ENCODE measurements at regions of chr10 and their contacts with region 1.

Region 1: GRCh38 chr10:102432162-102432950 is at the start of gene CUEDC2:
- DNase-seq: peak; percentile 96
- ATAC-seq: peak; percentile 98
- H3K4me3 Mint-ChIP-seq: peak within 1 kb of the TSS; percentile 93
- H3K27ac Mint-ChIP-seq: peak within 1 kb of the TSS; percentile 75
- H3K4me1 Mint-ChIP-seq: peaks cover 45% of the 10 kb centered on the region
- H3K27me3 Mint-ChIP-seq: no peaks in the 10 kb centered on the region
- CTCF ChIP-seq: no peak
- total RNA-seq, gene CUEDC2: 43.7 and 46.0 TPM in 2 replicates

Region 2: GRCh38 chr10:102151774-102152544 is 280.4 kb before region 1 on chr10 and contains the start of gene NOLC1:
- CTCF ChIA-PET with region 1: no interaction called
- POLR2A ChIA-PET with region 1: interaction called, 3 read pairs
- intact Hi-C with region 1: loop called (anchors 5 kb)
- DNase-seq: peak; percentile 99
- ATAC-seq: peak; percentile 96
- H3K4me3 Mint-ChIP-seq: peak within 1 kb of the TSS; percentile 97
- H3K27ac Mint-ChIP-seq: peak within 1 kb of the TSS; percentile 93
- H3K4me1 Mint-ChIP-seq: peaks cover 35% of the 10 kb centered on the region
- H3K27me3 Mint-ChIP-seq: no peaks in the 10 kb centered on the region
- CTCF ChIP-seq: no peak
- total RNA-seq, gene NOLC1: 95.1 and 106 TPM in 2 replicates

Region 3: GRCh38 chr10:102384053-102384452 is 48.3 kb before region 1 on chr10:
- CTCF ChIA-PET with region 1: no interaction called
- POLR2A ChIA-PET with region 1: interaction called, 11 read pairs
- intact Hi-C with region 1: no loop called
- DNase-seq: no peak
- ATAC-seq: peak; percentile 28
- H3K4me3 Mint-ChIP-seq: no peak overlapping the region
- H3K27ac Mint-ChIP-seq: peak overlapping the region; percentile 50
- H3K4me1 Mint-ChIP-seq: peaks cover 18% of the 10 kb centered on the region
- H3K27me3 Mint-ChIP-seq: no peaks in the 10 kb centered on the region
- CTCF ChIP-seq: no peak

Region 4: DNA sequence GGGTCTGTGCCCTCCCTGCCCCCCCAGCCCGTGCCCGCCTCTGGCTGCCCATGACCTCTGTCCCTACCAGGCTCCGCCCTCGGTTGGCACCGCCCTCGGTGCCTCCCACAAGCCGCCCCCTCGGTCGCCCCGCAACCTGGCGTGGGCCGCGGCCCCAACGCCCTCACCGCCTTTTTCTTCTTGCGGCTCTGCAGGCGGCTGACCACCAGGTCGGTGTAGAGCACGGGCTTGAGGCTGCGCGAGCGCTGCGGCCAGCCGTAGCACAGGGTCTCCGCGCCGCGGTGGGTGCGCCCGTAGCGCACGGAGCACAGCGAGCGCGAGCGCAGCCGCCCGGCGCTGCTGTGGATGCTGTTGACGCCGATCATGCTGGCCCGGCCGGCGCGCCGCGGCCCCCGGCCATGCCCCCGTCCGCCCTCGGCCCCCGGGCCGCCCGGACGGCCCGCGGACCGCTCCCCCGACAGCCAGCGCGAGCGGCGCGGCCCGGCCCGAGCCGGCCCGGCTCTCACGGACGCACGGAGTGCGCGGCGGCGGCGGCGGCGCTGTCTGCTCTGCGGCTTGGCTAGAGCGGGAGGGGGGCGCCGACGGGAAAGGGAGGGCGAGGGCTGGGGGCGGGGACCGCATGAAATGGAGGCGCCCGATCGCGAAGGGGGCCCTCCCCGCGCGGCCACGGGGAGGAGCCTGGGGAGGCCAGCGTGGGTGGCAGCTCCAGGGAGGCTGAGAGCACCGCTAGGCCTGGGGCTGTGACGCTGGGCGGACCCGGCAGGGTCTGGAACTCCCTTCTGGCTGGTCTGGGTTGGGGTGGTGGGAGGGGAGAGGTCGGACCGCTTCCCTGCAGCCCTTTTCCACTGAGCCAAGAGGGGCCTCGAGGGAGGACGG is 23.4 kb before region 1 on chr10:
- CTCF ChIA-PET with region 1: no interaction called
- POLR2A ChIA-PET with region 1: interaction called, 10 read pairs
- intact Hi-C with region 1: no loop called
- DNase-seq: peak; percentile 36
- ATAC-seq: peak; percentile 45
- H3K4me3 Mint-ChIP-seq: peak overlapping the region; percentile 59
- H3K27ac Mint-ChIP-seq: no peak overlapping the region
- H3K4me1 Mint-ChIP-seq: peaks cover 40% of the 10 kb centered on the region
- H3K27me3 Mint-ChIP-seq: peaks cover 42% of the 10 kb centered on the region
- CTCF ChIP-seq: no peak

Region 5: DNA sequence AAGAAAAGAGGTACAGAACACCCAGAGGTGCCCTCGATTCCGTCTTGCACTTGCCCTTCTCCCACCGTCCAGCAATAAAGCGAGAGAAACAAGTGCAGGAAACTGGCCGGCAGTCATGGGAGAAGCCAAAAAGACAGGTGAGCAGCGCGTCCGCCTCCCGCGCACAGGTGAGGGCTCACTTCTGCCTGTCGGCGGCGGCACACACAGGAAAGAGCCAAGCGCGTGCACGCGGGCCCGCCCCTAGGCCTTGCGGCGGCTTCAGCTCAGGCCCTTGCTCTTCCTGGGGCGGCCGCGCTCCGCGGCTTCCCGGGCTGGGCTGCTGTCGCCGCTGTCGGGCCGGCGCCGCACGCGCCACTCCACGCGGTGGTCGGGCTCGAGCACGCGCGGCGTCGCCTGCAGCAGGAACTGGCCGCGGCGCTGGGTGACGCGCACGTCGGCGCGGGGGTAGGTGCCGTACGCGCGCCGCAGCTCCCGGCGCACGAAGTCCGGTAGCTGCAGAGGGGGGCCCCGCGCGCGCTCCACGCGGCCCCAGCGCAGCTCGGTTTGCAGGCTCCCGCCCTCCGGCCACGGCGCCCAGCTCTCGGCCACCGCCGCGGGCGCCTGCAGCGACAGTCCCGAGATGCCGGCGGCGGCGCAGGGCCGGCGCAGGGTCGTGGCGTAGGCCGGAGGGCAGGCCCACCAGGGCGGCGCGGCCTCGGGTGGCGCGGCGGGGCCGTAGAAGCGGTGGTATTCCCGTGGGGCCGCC is 18.0 kb after region 1 on chr10:
- CTCF ChIA-PET with region 1: interaction called, 4 read pairs
- POLR2A ChIA-PET with region 1: interaction called, 76 read pairs
- intact Hi-C with region 1: loop called (anchors 1 kb)
- DNase-seq: peak; percentile 84
- ATAC-seq: peak; percentile 82
- H3K4me3 Mint-ChIP-seq: peak overlapping the region; percentile 92
- H3K27ac Mint-ChIP-seq: peak overlapping the region; percentile 94
- H3K4me1 Mint-ChIP-seq: peaks cover 24% of the 10 kb centered on the region
- H3K27me3 Mint-ChIP-seq: no peaks in the 10 kb centered on the region
- CTCF ChIP-seq: no peak

Region 6: GRCh38 chr10:102480396-102480795 is 48.0 kb after region 1 on chr10:
- CTCF ChIA-PET with region 1: no interaction called
- POLR2A ChIA-PET with region 1: interaction called, 3 read pairs
- intact Hi-C with region 1: loop called (anchors 1 kb)
- DNase-seq: no peak
- ATAC-seq: no peak
- H3K4me3 Mint-ChIP-seq: no peak overlapping the region
- H3K27ac Mint-ChIP-seq: no peak overlapping the region
- H3K4me1 Mint-ChIP-seq: peaks cover 7% of the 10 kb centered on the region
- H3K27me3 Mint-ChIP-seq: no peaks in the 10 kb centered on the region
- CTCF ChIP-seq: no peak

Measured in activated B cell treated with CpG ODN at 0.5 μM for 24 hours (primary cell).